ENCODE measurements at regions of chr19 and their contacts with region 1.

Region 1: DNA sequence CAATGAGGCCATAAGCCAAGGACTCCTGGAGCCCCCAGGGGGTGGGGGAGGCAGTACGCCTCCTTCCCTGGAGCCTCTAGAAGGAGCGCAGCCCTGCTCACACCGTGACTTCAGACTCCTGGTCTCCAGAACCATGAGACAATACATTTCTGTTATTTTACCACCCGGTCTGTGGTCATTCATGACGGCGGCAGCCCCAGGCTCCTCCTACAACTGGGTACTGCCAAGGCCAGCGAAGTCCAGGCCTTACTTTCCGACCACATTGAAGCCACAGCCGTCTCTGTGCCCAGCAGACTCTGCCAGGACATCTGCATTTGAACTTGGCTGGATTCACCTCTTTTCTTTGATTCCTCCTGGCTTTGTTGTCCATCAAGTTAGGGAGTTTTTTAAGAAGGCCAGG is 10.5 kb downstream of the GNG7 start:
- DNase-seq: no peak
- H3K4me3 ChIP-seq: no peak overlapping the region
- H3K27ac ChIP-seq: no peak overlapping the region
- H3K4me1 ChIP-seq: no peaks in the 10 kb centered on the region
- H3K27me3 ChIP-seq: no peaks in the 10 kb centered on the region
- CTCF ChIP-seq: no peak

Region 2: GRCh38 chr19:2561895-2562294 is 130.1 kb before region 1 on chr19:
- CTCF ChIA-PET with region 1: no interaction called
- dilution Hi-C with region 1: loop called (anchors 10 kb)
- in situ Hi-C with region 1: no loop called
- intact Hi-C with region 1: no loop called
- DNase-seq: no peak
- H3K4me3 ChIP-seq: no peak overlapping the region
- H3K27ac ChIP-seq: no peak overlapping the region
- H3K4me1 ChIP-seq: peaks cover 3% of the 10 kb centered on the region
- H3K27me3 ChIP-seq: no peaks in the 10 kb centered on the region
- CTCF ChIP-seq: no peak

Measured in mammary epithelial cell (primary cell).